ENCODE measurements at regions of chr11 and their contacts with region 1.

Region 1: DNA sequence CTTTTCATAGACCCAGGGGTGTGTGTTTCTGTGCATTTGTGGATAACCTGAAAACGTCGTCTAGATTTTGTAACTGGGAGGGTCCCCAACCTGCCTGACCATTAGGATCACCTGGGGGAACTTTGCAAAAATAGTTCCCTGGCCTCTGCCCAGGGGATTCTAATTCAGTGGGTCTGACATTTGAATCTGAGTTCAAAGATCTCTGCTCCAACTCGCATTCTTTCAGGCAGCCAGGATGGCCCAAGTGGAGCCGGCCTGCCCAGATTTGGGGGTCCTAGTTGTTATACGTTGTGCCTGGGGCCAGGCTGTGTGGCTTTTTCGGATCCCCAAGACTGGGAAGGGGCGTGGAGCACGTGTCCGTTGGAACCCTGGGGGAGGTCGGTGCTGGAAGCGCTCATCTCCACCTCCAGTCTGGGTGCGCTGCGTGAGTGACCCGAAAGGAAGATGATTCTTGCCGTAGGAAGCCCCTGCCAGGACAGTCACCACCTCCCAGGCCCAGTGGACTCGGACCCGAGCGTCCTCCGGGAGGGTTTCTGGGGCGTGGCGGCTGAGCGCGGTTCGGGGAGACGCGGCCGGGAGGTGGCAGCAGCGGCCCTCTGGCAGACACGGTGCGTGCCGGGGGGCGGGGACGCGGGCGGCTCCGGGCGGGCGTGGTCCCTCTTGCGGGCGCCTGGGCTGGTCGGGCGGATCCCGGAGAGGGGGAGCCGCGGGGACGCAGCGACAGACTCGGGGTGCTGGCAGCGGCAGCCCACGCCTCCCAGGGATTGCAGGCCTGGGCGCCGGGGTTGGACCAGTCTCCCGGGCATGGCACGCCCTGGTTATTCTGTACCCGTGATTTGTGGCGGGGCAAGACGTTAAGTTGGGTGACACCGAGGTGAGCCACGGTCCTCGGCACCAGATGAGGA is 29.2 kb upstream of the PLET1 start:
- DNase-seq: peak; percentile 80 to 90
- H3K4me3 ChIP-seq: peak overlapping the region; percentile 73 to 93
- H3K27ac ChIP-seq: peak overlapping the region; percentile 88 to 91
- H3K4me1 ChIP-seq: peaks cover 0 to 49% (median 28%) of the 10 kb centered on the region in 4 donors
- H3K27me3 ChIP-seq: no peaks in the 10 kb centered on the region
- CTCF ChIP-seq: peak; percentile 86 to 87

Region 2: DNA sequence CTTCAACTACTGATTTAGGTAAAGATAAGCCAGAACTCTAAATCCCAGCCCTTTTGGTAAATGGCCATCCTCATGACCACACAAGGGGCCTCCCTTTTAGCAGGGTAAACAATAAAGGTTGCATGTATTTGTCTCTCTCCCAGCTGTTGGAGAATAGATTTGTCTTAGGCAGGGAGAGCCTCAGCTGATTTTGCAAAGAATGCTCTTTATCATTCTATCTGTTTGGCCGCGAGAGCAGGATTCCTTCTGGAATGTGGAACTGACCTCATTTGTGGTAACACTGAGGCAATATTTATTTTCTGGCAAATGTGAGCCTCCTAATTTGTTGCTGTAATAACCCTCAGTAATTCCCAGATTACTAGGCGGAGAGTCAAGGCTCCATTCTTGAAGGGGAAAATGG is 48.4 kb before region 1 on chr11:
- intact Hi-C with region 1: no loop called
- DNase-seq: peak in 1 of 2 donors; percentile 43
- H3K4me3 ChIP-seq: no peak overlapping the region
- H3K27ac ChIP-seq: no peak overlapping the region
- H3K4me1 ChIP-seq: no peaks in the 10 kb centered on the region
- H3K27me3 ChIP-seq: no peaks in the 10 kb centered on the region
- CTCF ChIP-seq: no peak

Region 3: DNA sequence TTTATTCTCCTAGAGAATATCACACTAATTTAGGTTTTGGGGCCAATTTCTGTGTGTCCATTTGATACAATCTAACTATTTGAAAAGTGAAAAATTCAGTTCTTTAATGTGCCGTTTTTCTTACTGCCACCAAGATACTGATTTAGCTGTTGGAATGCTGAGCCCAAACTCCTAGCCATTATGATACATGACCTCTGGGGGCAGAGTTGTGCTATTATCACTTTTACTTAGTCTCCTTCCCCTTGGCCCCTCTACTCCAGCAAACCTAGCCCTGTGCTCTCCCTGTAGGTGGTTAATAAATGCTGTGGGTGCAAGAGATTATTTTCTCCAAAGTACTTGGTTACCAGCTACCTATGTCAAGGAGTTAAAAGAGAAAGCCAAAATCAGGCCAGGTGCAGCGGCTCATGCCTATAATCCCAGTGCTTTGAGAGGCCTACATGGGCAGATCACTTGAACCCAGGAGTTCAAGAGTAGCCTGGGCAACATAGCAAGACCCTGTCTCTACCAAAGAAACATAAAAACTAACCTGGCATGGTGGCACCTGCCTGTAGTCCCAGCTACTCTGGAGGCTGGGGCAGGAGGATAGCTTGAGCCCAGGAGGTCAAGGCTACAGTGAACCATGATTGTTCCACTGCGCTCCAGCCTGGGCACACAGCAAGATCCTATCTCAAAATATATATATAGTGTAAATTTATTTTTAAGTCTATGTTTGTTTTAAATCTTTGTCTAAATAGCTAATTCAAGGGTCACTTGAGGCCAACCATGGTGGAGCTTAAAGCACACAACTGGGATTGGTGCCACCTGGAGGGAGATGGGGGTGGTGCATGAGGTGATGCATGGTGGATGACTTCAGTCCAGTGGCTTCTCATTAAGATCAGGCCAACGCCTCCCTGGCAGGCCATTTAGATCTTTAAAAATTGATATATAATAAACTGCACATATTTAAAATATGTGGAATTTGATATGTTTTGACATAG is 164.0 kb after region 1 on chr11:
- intact Hi-C with region 1: loop called (anchors 5 kb)
- DNase-seq: no peak
- H3K4me3 ChIP-seq: no peak overlapping the region
- H3K27ac ChIP-seq: no peak overlapping the region
- H3K4me1 ChIP-seq: no peaks in the 10 kb centered on the region
- H3K27me3 ChIP-seq: no peaks in the 10 kb centered on the region
- CTCF ChIP-seq: peak; percentile 37 to 45

Region 4: DNA sequence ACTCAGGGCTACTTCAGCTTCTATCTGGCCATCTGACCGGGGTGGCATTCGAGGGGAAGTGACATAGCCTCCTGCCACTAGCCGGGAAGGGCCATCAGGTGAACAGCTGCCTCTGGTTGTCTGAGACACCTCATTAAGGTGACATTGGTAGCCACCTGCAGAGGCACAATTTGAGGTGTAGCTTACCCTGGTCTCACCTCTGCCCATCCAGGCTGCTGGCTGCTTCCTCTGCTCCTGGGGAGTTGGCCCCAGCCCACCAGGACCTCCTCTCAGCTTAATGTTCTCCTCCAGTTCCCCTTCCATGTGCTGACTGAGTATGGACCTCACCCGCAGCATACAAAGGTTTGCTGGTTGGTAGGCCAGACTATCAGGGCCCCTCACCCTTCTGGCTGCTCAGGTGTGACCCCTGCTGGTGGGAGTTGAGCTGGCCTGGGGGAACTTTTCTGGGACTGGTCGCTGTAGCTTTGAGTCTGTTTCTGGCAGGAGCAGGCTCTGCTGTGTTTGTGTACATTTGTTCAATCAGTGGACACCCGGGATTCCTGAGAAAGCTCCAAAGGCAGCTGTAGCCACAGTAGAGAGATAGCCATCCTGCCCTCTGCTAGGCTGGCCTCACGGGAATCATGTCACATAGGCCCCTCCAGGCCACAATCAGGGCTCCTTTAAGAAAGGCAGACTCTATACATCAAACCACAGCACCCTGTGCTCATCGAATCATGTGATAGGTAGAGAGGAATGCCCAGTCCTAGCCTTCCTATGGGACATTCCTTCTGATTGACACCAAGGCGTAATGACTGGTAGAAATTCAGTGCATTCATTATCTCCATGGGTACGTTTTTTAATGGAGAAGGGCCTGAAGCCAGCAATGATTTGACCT is 265.9 kb after region 1 on chr11:
- intact Hi-C with region 1: loop called (anchors 1 kb)
- DNase-seq: peak; percentile 29 to 73
- H3K4me3 ChIP-seq: no peak overlapping the region
- H3K27ac ChIP-seq: no peak overlapping the region
- H3K4me1 ChIP-seq: peaks cover 0 to 8% (median 0%) of the 10 kb centered on the region in 4 donors
- H3K27me3 ChIP-seq: no peaks in the 10 kb centered on the region
- CTCF ChIP-seq: peak; percentile 62 to 64

Measured in tibial artery (tissue), 4 donors.